ENCODE measurements at regions of chr9 and their contacts with region 1.

Region 1: DNA sequence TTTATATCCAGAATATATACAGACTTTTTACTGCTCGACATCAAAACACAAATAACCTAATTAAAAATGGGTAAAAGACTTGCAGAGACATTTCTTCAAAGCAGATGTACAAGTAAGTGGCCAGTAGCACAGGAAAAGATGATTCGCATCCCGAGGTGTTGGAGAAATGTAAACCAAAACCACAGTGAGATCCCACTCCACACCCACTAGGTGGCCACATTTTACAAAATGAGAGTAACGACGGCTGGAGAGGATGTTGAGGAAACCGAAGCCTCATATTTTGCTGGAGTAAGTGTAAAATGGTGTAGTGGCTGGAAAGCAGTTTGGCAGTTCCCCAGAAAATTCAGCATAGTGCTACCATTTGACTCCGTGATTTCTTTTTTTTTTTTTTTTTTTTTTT is 21.2 kb upstream of the GBGT1 start:
- DNase-seq: peak; percentile 83 to 92 (median 90)
- H3K4me3 ChIP-seq: peak overlapping the region in 2 of 7 experiments; percentile 19 to 23
- H3K27ac ChIP-seq: no peak overlapping the region
- H3K4me1 ChIP-seq: peaks cover 0 to 16% (median 8%) of the 10 kb centered on the region in 4 experiments
- H3K27me3 ChIP-seq: peaks cover 0 to 6% (median 0%) of the 10 kb centered on the region in 5 experiments

Region 2: GRCh38 chr9:133160742-133161546 is 24.0 kb before region 1 on chr9:
- CTCF ChIA-PET with region 1: interaction called, 14 read pairs
- POLR2A ChIA-PET with region 1: no interaction called
- DNase-seq: peak; percentile 58 to 69 (median 67)
- H3K4me3 ChIP-seq: no peak overlapping the region
- H3K27ac ChIP-seq: no peak overlapping the region
- H3K4me1 ChIP-seq: peaks cover 0 to 36% (median 32%) of the 10 kb centered on the region in 4 experiments
- H3K27me3 ChIP-seq: no peaks in the 10 kb centered on the region

Region 3: GRCh38 chr9:133238851-133239532 is 54.0 kb after region 1 on chr9:
- CTCF ChIA-PET with region 1: interaction called, 42 read pairs
- POLR2A ChIA-PET with region 1: no interaction called
- DNase-seq: peak; percentile 89 to 93 (median 92)
- H3K4me3 ChIP-seq: peak overlapping the region; percentile 17 to 85 (median 56)
- H3K27ac ChIP-seq: peak overlapping the region in 1 of 2 experiments; percentile 70
- H3K4me1 ChIP-seq: peaks cover 2 to 49% (median 21%) of the 10 kb centered on the region in 4 experiments
- H3K27me3 ChIP-seq: no peaks in the 10 kb centered on the region

Region 4: DNA sequence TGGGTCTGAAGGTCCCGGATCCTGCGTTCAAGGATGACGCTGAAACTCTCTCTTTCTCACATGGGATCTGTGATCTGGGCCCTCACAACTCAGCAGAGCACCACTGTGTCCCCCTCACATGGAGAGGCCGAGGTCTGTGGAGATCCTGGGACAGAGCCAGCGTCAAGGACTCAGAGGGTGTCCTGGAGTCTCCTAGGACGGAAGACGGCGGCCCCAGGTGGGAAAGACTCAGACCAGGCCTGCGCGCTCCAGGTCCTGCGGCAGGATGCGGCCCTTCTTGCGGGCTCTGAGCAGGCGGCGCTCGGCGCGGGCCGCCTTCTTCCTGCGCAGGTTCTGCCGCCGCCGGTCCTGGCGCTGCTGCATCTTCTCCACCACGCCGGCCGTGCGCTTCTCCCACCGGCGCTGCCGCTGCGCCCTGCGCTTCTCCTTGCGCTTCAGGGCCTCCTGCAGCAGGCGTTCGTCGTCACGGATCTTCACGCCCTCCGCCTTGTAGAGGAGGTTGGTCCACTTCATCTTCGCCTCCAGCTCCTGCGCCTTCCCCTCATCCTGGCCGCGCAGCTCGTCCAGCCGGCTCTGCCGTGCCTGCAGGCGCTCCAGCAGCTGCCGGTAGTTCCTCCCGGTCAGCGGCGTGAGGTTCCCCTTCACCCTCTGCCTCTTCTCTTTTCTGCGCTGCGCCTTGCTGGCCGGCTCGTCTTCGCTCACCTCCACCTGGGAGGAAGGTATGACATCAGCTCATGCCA is 146.8 kb after region 1 on chr9:
- CTCF ChIA-PET with region 1: interaction called, 63 read pairs
- POLR2A ChIA-PET with region 1: interaction called, 4 read pairs
- DNase-seq: no peak
- H3K4me3 ChIP-seq: no peak overlapping the region
- H3K27ac ChIP-seq: no peak overlapping the region
- H3K4me1 ChIP-seq: peaks cover 4 to 19% (median 19%) of the 10 kb centered on the region in 4 experiments
- H3K27me3 ChIP-seq: no peaks in the 10 kb centered on the region

Region 5: DNA sequence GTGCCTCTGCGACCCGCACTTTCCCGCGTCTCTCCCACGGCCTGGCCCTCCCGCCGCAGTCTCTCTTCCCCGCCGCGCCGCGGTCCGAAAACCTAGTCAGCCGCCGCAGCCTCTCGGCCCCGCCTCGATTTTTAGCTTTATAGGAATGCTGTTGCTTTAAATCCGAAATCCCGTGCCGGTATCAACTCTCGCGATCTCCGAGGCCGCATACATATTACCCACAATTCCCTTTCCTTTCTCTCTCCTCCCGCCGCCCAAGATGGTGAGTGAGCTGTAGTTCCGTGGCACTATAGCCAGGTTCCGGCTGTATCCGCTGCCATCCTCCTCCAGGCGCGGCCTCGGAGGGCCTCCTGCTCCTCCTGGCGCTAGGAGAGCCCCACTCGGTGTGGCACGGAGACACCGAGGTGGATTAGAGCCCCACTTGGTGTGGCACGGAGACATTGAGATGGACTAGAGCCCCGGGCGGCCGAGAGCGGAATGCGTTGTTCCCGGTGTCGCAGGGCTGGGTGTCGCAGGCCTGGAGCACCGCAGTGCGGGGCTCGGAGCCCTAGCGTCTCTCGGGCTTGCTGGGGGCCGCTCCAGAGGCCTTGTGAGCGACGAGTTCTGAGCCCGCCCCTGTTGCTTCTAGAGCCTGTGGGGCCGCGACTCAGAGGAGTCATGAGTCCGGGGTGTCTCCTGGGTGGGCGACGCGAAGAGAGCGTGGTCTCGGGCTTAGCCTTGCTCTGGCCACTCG is 163.2 kb after region 1 on chr9 and contains the starts of genes MED22 and RPL7A:
- CTCF ChIA-PET with region 1: interaction called, 30 read pairs
- POLR2A ChIA-PET with region 1: interaction called, 4 read pairs
- DNase-seq: peak; percentile 96 to 98 (median 97)
- H3K4me3 ChIP-seq: peak within 1 kb of the TSS; percentile 94 to 100 (median 99)
- H3K27ac ChIP-seq: peak within 1 kb of the TSS; percentile 95 to 99
- H3K4me1 ChIP-seq: peaks cover 4 to 33% (median 30%) of the 10 kb centered on the region in 4 experiments
- H3K27me3 ChIP-seq: no peaks in the 10 kb centered on the region

Region 6: GRCh38 chr9:133485361-133486260 is 300.6 kb after region 1 on chr9:
- CTCF ChIA-PET with region 1: interaction called, 12 read pairs
- POLR2A ChIA-PET with region 1: no interaction called
- DNase-seq: peak in 2 of 3 donors; percentile 42 to 58
- H3K4me3 ChIP-seq: peak overlapping the region in 4 of 7 experiments; percentile 33 to 58 (median 40)
- H3K27ac ChIP-seq: no peak overlapping the region
- H3K4me1 ChIP-seq: peaks cover 0 to 18% (median 14%) of the 10 kb centered on the region in 4 experiments
- H3K27me3 ChIP-seq: no peaks in the 10 kb centered on the region